Naive thymus-derived CD4-positive, alpha-beta T cell (primary cell): ENCODE measurements at regions of chr12 and their contacts with region 1.

Region 1: DNA sequence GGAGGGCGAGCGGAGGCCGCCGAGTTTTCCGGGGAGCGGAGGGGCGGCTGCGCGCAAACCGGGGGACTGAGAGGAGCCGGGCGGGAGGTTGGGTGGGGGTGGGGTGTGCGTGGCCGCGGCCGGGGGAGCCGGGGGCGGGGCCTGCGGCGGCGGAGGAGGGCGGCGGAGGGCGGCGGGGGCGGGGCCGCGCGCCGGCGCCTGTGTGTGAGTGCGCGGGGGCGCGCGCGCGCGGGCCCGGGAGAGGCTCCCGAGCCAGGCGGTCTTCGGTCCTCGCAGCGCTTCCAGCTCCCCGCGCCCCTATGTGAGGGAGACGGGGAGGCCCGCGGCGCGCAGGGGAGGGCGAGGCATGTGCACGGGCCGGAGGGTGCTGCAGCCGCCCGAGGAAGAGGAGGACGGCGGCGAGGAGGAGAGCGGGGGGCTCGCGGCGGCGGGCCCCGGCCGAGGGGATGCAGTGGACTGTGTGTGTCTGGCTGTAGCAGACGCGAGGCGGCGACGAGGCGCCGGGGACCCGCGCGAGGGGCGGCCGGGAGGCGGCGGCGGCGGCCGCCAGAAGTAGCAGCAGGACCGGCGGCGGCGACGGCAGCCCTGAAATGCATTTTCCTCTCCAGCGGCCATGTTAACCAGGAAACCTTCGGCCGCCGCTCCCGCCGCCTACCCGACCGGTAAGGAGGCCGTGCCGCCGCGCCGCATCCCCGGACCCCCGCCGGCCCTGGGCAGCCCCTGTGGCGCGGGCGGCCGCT is at the start of gene DYRK2:
- DNase-seq: peak; percentile 65 to 83 (median 78)
- ATAC-seq: peak; percentile 81
- H3K4me3 ChIP-seq: peak within 1 kb of the TSS; percentile 93
- H3K4me3 Mint-ChIP-seq: peak within 1 kb of the TSS; percentile 93 to 100 (median 98)
- H3K27ac ChIP-seq: peak within 1 kb of the TSS; percentile 90
- H3K27ac Mint-ChIP-seq: peak within 1 kb of the TSS; percentile 89 to 100 (median 98)
- H3K4me1 ChIP-seq: peaks cover 22 to 23% of the 10 kb centered on the region in 2 donors
- H3K4me1 Mint-ChIP-seq: peaks cover 38 to 48% (median 42%) of the 10 kb centered on the region in 7 donors
- H3K27me3 ChIP-seq: no peaks in the 10 kb centered on the region
- H3K27me3 Mint-ChIP-seq: peaks cover 0 to 13% (median 0%) of the 10 kb centered on the region in 5 donors
- total RNA-seq, gene DYRK2: 55.3 to 157 (median 119) TPM

Region 2: GRCh38 chr12:67355578-67356379 is 292.9 kb before region 1 on chr12:
- CTCF ChIA-PET with region 1: interaction called, 8 read pairs
- POLR2A ChIA-PET with region 1: interaction called, 4 read pairs
- intact Hi-C with region 1: loop called (anchors 1 to 5 kb)
- DNase-seq: peak in 7 of 9 donors; percentile 27 to 68 (median 61)
- ATAC-seq: peak; percentile 70
- H3K4me3 ChIP-seq: no peak overlapping the region
- H3K4me3 Mint-ChIP-seq: peak overlapping the region in 7 of 10 donors; percentile 23 to 65 (median 51)
- H3K27ac ChIP-seq: no peak overlapping the region
- H3K27ac Mint-ChIP-seq: peak overlapping the region in 3 of 9 donors; percentile 42 to 63 (median 54)
- H3K4me1 ChIP-seq: peaks cover 0 to 5% of the 10 kb centered on the region in 2 donors
- H3K4me1 Mint-ChIP-seq: peaks cover 2 to 21% (median 16%) of the 10 kb centered on the region in 7 donors
- H3K27me3 ChIP-seq: no peaks in the 10 kb centered on the region
- H3K27me3 Mint-ChIP-seq: no peaks in the 10 kb centered on the region

Region 3: DNA sequence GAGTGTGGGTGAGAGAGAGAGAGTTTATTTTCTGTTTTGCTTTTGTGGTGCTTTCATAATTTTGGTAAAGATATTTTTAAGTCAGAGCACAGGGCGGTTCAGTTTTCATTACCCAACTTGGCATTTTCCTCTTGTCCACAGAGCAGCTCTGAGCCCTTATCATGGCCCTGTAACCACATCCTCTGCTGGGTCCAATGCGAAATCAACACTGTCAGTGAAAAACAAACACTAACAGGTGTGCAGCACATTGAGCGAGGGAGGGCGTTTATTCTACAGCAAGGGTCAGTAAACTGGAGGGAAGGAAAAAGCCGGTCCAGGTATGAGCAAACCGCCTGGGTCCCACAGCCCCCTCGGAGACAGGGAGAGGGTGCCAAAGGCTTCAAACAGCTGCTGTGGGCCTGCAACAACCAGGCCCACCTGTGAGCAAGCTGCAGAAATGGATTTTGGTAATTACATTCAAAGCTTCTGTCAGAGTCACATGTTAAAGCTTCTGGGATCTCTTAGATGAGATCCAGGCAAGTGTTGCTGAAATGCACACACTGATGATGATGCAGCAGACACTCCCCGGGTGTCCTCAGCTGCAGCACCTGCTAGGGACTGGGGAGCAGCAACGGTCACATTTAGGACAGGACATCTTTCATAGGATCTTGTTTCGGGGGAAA is 132.9 kb before region 1 on chr12:
- CTCF ChIA-PET with region 1: no interaction called
- POLR2A ChIA-PET with region 1: interaction called, 12 read pairs
- intact Hi-C with region 1: loop called (anchors 1 to 2 kb)
- DNase-seq: peak in 8 of 9 donors; percentile 11 to 70 (median 50)
- ATAC-seq: peak; percentile 82
- H3K4me3 ChIP-seq: peak overlapping the region; percentile 37
- H3K4me3 Mint-ChIP-seq: peak overlapping the region; percentile 52 to 81 (median 72)
- H3K27ac ChIP-seq: no peak overlapping the region
- H3K27ac Mint-ChIP-seq: peak overlapping the region; percentile 40 to 90 (median 79)
- H3K4me1 ChIP-seq: peaks cover 34 to 39% of the 10 kb centered on the region in 2 donors
- H3K4me1 Mint-ChIP-seq: peaks cover 36 to 65% (median 54%) of the 10 kb centered on the region in 7 donors
- H3K27me3 ChIP-seq: no peaks in the 10 kb centered on the region
- H3K27me3 Mint-ChIP-seq: peaks cover 0 to 15% (median 0%) of the 10 kb centered on the region in 5 donors

Region 4: GRCh38 chr12:67630373-67631088 is 18.2 kb before region 1 on chr12:
- CTCF ChIA-PET with region 1: interaction called, 28 read pairs
- POLR2A ChIA-PET with region 1: interaction called, 273 read pairs
- intact Hi-C with region 1: loop called (anchors 1 kb)
- DNase-seq: peak; percentile 51 to 97 (median 96)
- ATAC-seq: peak; percentile 100
- H3K4me3 ChIP-seq: peak overlapping the region; percentile 20
- H3K4me3 Mint-ChIP-seq: peak overlapping the region; percentile 21 to 89 (median 78)
- H3K27ac ChIP-seq: peak overlapping the region; percentile 79
- H3K27ac Mint-ChIP-seq: peak overlapping the region; percentile 91 to 100 (median 96)
- H3K4me1 ChIP-seq: peaks cover 83 to 85% of the 10 kb centered on the region in 2 donors
- H3K4me1 Mint-ChIP-seq: peaks cover 42 to 98% (median 93%) of the 10 kb centered on the region in 7 donors
- H3K27me3 ChIP-seq: no peaks in the 10 kb centered on the region
- H3K27me3 Mint-ChIP-seq: peaks cover 0 to 12% (median 0%) of the 10 kb centered on the region in 5 donors

Region 5: DNA sequence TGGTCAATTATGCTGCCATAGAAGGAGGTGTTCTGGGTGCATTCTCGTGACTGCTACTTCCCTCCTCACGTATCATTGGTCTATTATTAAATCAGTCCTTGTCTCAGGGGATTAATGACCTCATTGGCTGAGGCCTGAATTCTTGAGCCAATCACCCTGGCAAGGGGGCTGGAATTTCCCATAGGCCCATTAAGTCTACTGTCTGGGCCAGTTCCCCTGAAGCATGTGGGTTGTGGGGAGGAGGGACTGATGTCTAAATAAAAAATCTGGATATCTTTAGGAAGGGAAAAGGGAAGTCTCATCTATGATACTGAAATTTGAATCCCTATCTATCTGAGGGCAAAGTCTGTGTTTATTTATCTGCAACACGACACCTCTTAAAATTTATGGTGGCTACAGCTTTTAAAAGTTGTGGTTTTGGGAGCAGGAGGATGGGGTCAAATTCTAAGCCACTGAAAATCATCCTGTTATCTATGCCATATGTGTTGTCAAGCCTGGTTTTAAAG is 71.7 kb after region 1 on chr12:
- CTCF ChIA-PET with region 1: no interaction called
- POLR2A ChIA-PET with region 1: no interaction called
- intact Hi-C with region 1: no loop called
- DNase-seq: no peak
- ATAC-seq: no peak
- H3K4me3 ChIP-seq: no peak overlapping the region
- H3K4me3 Mint-ChIP-seq: no peak overlapping the region
- H3K27ac ChIP-seq: no peak overlapping the region
- H3K27ac Mint-ChIP-seq: no peak overlapping the region
- H3K4me1 ChIP-seq: no peaks in the 10 kb centered on the region
- H3K4me1 Mint-ChIP-seq: peaks cover 0 to 4% (median 0%) of the 10 kb centered on the region in 7 donors
- H3K27me3 ChIP-seq: no peaks in the 10 kb centered on the region
- H3K27me3 Mint-ChIP-seq: peaks cover 0 to 4% (median 0%) of the 10 kb centered on the region in 5 donors

Region 6: DNA sequence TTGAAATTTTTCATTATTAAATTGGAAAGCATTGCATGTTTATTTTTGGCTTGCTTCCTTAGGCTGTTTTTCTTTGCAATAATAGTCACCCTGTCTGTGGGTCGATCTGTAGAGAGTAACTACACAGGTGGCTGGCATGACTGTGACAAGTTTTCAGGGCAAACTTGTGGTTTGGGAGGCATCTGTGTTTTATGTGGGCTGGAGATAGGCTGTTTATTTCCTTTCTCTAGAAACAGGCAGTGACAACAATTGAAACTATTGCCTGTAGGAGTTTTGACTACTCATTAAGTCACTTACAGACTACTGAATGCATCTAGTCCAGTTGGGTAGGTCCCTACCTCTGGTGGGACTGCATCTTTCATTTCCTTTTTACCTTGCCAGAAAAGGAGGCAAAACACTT is 155.5 kb after region 1 on chr12:
- CTCF ChIA-PET with region 1: no interaction called
- POLR2A ChIA-PET with region 1: no interaction called
- intact Hi-C with region 1: loop called (anchors 1 to 2 kb)
- DNase-seq: peak in 8 of 9 donors; percentile 29 to 87 (median 62)
- ATAC-seq: peak; percentile 93
- H3K4me3 ChIP-seq: no peak overlapping the region
- H3K4me3 Mint-ChIP-seq: no peak overlapping the region
- H3K27ac ChIP-seq: no peak overlapping the region
- H3K27ac Mint-ChIP-seq: no peak overlapping the region
- H3K4me1 ChIP-seq: peaks cover 18 to 28% of the 10 kb centered on the region in 2 donors
- H3K4me1 Mint-ChIP-seq: peaks cover 4 to 24% (median 7%) of the 10 kb centered on the region in 7 donors
- H3K27me3 ChIP-seq: no peaks in the 10 kb centered on the region
- H3K27me3 Mint-ChIP-seq: peaks cover 0 to under 1% (median 0%) of the 10 kb centered on the region in 5 donors

Region 7: GRCh38 chr12:67837876-67838275 is 189.2 kb after region 1 on chr12:
- CTCF ChIA-PET with region 1: no interaction called
- POLR2A ChIA-PET with region 1: no interaction called
- intact Hi-C with region 1: no loop called
- DNase-seq: no peak
- ATAC-seq: no peak
- H3K4me3 ChIP-seq: no peak overlapping the region
- H3K4me3 Mint-ChIP-seq: no peak overlapping the region
- H3K27ac ChIP-seq: no peak overlapping the region
- H3K27ac Mint-ChIP-seq: no peak overlapping the region
- H3K4me1 ChIP-seq: no peaks in the 10 kb centered on the region
- H3K4me1 Mint-ChIP-seq: no peaks in the 10 kb centered on the region
- H3K27me3 ChIP-seq: no peaks in the 10 kb centered on the region
- H3K27me3 Mint-ChIP-seq: peaks cover 0 to 2% (median 0%) of the 10 kb centered on the region in 5 donors

Region 8: GRCh38 chr12:68175557-68176061 is 526.9 kb after region 1 on chr12:
- CTCF ChIA-PET with region 1: no interaction called
- POLR2A ChIA-PET with region 1: no interaction called
- intact Hi-C with region 1: loop called in 1 of 2 experiments (anchors 10 kb)
- DNase-seq: peak; percentile 35 to 90 (median 86)
- ATAC-seq: peak; percentile 93
- H3K4me3 ChIP-seq: peak overlapping the region; percentile 40
- H3K4me3 Mint-ChIP-seq: peak overlapping the region; percentile 69 to 86 (median 84)
- H3K27ac ChIP-seq: peak overlapping the region; percentile 78
- H3K27ac Mint-ChIP-seq: peak overlapping the region; percentile 87 to 97 (median 93)
- H3K4me1 ChIP-seq: peaks cover 20 to 65% of the 10 kb centered on the region in 2 donors
- H3K4me1 Mint-ChIP-seq: peaks cover 30 to 82% (median 67%) of the 10 kb centered on the region in 7 donors
- H3K27me3 ChIP-seq: no peaks in the 10 kb centered on the region
- H3K27me3 Mint-ChIP-seq: no peaks in the 10 kb centered on the region